ENCODE measurements at regions of chr11 and their contacts with region 1.

Region 1: DNA sequence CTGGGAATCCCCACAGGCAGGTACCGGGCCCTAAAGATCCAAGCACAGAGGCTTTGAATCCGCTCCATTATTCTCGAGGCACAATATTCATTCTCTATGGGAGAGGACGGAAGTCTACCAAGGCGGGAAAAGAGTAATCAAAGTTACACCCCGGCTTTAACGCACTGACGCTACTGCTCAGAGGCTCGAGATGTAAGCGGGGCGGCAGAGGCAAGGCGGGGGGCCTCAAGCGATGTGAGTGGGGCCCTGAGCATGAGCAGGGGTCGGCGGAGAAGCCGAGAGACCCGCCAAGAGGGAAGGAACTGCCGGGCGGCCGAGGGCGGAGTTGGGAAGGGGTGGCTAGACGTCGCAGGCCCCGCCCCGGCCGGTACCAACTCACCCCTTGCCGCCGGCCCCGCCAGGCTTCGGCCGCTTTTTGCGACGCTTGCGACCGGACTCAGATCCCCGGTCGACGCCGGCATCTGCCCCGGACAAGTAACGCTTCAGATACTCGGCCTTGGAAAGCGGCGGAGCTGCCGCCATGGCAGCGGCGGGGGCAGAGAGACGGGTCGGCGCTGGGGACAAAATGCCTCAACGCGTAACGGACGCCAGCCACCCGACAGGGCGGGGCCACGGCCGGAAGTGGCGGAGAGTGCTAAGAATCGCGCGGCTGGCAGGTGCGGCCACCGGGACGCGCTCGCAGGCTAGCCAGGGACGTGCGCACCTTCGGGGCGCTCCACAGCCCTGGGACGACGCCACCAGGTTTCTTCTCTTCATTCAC is at the start of gene BUD13:
- DNase-seq: peak; percentile 96
- H3K4me3 Mint-ChIP-seq: peak within 1 kb of the TSS; percentile 99
- H3K27ac Mint-ChIP-seq: peak within 1 kb of the TSS; percentile 97
- H3K4me1 Mint-ChIP-seq: peaks cover 48% of the 10 kb centered on the region
- H3K27me3 Mint-ChIP-seq: no peaks in the 10 kb centered on the region
- total RNA-seq, gene BUD13: 35.0 to 37.7 TPM

Region 2: GRCh38 chr11:116732271-116733042 is 40.2 kb before region 1 on chr11:
- CTCF ChIA-PET with region 1: interaction called, 3 read pairs
- intact Hi-C with region 1: loop called (anchors 2 kb)
- DNase-seq: peak; percentile 77
- H3K4me3 Mint-ChIP-seq: no peak overlapping the region
- H3K27ac Mint-ChIP-seq: no peak overlapping the region
- H3K4me1 Mint-ChIP-seq: peaks cover 10% of the 10 kb centered on the region
- H3K27me3 Mint-ChIP-seq: no peaks in the 10 kb centered on the region

Region 3: DNA sequence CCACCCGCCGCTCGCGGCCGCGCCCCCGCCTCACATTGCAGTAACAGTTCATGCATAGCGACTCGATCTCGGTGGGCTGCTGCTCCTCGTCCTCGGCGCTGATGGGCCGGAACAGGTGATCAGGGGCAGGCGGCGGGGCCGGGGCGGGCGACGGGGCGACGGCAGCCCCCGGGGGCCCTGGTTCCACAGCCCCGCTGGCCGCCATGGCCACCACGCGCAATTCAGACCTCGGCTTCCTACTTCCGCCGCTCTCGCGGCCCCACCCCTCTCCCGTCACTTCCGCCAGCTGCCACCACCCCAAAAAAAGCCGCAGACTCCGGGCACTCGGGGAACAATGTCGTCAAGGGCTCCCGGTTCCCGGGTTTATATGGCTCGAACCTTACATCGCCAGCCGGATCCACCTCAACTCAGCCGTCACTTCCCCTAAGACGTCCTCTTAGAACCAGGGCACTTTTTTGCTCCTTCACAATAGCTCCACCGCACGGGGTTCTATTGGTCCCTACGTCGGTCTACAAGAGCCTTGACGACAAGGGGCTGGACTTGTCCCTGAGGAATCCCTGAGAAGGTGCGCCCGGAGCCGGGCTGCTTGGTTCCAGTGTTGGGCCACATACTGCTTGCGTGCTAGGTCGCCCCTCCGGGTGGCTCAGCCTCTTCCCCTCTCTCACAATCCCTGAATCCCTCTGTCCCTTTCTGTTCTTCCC is 15.3 kb after region 1 on chr11 and contains the start of gene ZPR1:
- CTCF ChIA-PET with region 1: interaction called, 5 read pairs
- intact Hi-C with region 1: loop called (anchors 1 kb)
- DNase-seq: peak; percentile 87
- H3K4me3 Mint-ChIP-seq: peak within 1 kb of the TSS; percentile 92
- H3K27ac Mint-ChIP-seq: peak within 1 kb of the TSS; percentile 87
- H3K4me1 Mint-ChIP-seq: peaks cover 51% of the 10 kb centered on the region
- H3K27me3 Mint-ChIP-seq: no peaks in the 10 kb centered on the region
- total RNA-seq, gene ZPR1: 87.2 to 87.8 TPM

Region 4: GRCh38 chr11:116927163-116927974 is 154.7 kb after region 1 on chr11:
- CTCF ChIA-PET with region 1: no interaction called
- intact Hi-C with region 1: loop called (anchors 2 kb)
- DNase-seq: peak; percentile 73
- H3K4me3 Mint-ChIP-seq: peak overlapping the region; percentile 34
- H3K27ac Mint-ChIP-seq: peak overlapping the region; percentile 75
- H3K4me1 Mint-ChIP-seq: peaks cover 61% of the 10 kb centered on the region
- H3K27me3 Mint-ChIP-seq: no peaks in the 10 kb centered on the region

Region 5: DNA sequence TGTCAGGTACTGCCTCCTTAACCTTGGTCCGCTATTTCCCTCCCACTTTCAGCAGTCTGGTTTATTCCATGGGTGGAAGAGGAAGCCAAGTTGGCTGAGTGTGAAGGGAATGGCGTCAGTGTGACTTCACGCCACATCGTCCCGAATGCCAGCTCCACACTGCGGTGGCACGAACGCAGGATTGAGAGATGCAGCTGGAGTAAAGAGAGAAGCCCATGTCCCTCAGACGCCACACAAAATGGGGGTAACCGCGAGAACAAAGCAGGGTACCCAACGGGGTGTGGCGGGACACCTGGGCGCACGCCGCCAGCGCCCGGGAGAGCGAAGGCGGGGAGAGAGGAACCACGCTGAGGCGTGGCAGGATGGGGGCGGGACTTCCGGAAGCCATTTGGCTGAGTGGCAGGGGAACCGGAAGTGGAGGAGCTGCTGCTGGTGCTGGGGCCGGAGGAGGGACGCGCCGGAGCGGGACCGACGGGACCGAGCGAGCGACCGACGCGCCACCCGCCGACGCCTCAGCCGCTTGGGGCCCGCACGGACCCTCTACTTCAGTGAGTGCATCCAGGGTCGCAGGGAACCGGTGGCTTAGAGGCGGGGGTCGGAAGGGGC is 371.4 kb after region 1 on chr11 and contains the start of gene PAFAH1B2:
- CTCF ChIA-PET with region 1: no interaction called
- intact Hi-C with region 1: loop called (anchors 1 kb)
- DNase-seq: peak; percentile 98
- H3K4me3 Mint-ChIP-seq: peak within 1 kb of the TSS; percentile 95
- H3K27ac Mint-ChIP-seq: peak within 1 kb of the TSS; percentile 91
- H3K4me1 Mint-ChIP-seq: peaks cover 37% of the 10 kb centered on the region
- H3K27me3 Mint-ChIP-seq: no peaks in the 10 kb centered on the region
- total RNA-seq, gene PAFAH1B2: 43.7 to 44.3 TPM

Region 6: DNA sequence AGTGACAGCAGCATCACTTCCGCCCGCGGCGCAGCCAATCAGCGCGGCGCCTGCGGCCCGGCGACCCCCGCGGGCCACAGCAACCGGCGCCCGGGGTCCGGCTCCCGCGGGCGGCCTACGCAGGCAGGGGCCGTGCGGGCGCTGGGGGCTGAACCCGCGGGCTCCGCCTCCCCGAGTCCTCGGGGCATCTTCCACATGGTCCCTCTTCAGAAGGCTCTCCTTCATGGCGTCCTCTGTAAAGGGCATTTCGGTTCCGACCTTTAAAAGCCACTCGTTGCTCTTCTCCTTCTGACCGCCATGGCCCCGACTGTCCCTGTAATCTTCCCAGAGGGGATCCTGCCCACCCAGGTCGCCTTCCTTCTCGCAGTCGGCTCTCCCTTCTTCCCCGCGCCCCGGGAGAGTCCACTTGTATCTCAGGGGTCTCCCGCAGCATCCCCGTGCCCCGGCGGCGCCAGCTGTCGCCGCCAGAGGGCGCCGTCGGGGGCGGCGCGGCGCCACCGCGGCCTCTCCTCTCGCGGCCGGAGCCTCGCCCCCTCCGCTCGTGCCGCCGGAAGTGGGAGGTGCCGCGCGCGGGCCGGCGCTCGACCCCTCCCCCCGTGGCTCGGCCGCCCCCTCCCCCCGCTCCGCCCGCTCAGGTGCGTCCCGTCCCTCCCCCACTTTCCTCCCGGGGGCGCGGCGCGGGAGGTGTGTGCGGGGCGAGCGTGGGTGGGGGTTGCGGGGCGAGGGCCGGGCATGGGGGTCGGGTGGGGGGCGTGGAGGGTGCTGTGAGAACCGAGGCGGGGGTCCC is 459.7 kb after region 1 on chr11 and contains the start of gene RNF214:
- CTCF ChIA-PET with region 1: interaction called, 4 read pairs
- intact Hi-C with region 1: loop called (anchors 1 kb)
- DNase-seq: peak; percentile 74
- H3K4me3 Mint-ChIP-seq: peak within 1 kb of the TSS; percentile 99
- H3K27ac Mint-ChIP-seq: peak within 1 kb of the TSS; percentile 99
- H3K4me1 Mint-ChIP-seq: peaks cover 34% of the 10 kb centered on the region
- H3K27me3 Mint-ChIP-seq: no peaks in the 10 kb centered on the region
- total RNA-seq, gene RNF214: 14.0 to 14.4 TPM

Region 7: DNA sequence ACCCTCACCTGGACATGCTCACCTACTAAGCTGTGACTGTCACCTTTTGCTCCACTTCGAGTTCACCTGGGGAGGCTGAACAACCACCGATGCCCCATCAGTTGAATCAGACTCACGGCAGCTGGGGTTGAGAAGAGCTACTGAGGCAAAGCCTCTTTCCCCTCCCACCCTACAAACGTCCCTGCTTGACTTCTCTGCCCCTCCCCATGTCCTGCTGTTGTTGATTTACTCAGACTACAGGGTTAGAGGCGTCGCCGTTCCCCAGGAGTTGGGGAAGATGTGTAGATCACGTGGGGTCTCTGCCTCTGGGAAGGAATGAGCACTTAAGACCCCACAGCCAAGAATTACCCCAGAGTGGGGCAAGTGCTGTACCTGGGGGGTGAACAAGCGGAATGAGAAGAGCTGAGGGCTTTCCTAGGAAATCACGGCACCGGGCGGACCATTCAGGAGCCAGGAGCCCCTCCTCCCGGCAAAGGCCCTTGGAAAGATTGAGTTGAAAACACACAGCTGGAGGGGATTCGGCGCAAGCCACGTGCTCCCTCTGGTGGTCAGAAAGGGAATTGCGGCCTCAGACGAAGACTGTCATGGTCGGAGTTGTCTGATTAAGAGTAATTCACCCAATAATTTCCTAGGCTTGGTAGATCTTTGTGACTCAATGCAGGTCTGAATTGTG is 1044.9 kb after region 1 on chr11:
- CTCF ChIA-PET with region 1: no interaction called
- intact Hi-C with region 1: loop called (anchors 10 kb)
- DNase-seq: peak; percentile 98
- H3K4me3 Mint-ChIP-seq: peak overlapping the region; percentile 56
- H3K27ac Mint-ChIP-seq: peak overlapping the region; percentile 95
- H3K4me1 Mint-ChIP-seq: peaks cover 65% of the 10 kb centered on the region
- H3K27me3 Mint-ChIP-seq: no peaks in the 10 kb centered on the region

Measured in activated naive CD4-positive, alpha-beta T cell treated with anti-CD3 and anti-CD28 coated beads for 36 hours (primary cell).